Activated naive CD4-positive, alpha-beta T cell treated with anti-CD3 and anti-CD28 coated beads for 36 hours (primary cell): ENCODE measurements at regions of chr17 and their contacts with region 1.

Region 1: GRCh38 chr17:39863918-39864746 is at the start of gene IKZF3:
- DNase-seq: peak; percentile 94
- H3K4me3 Mint-ChIP-seq: peak within 1 kb of the TSS; percentile 92
- H3K27ac Mint-ChIP-seq: peak within 1 kb of the TSS; percentile 95
- H3K4me1 Mint-ChIP-seq: peaks cover 61% of the 10 kb centered on the region
- H3K27me3 Mint-ChIP-seq: no peaks in the 10 kb centered on the region
- total RNA-seq, gene IKZF3: 34.2 to 36.1 TPM

Region 2: GRCh38 chr17:39401412-39402243 is 462.5 kb before region 1 on chr17 and contains the start of gene FBXL20:
- CTCF ChIA-PET with region 1: no interaction called
- intact Hi-C with region 1: loop called (anchors 5 kb)
- DNase-seq: peak; percentile 96
- H3K4me3 Mint-ChIP-seq: peak within 1 kb of the TSS; percentile 91
- H3K27ac Mint-ChIP-seq: peak within 1 kb of the TSS; percentile 90
- H3K4me1 Mint-ChIP-seq: peaks cover 61% of the 10 kb centered on the region
- H3K27me3 Mint-ChIP-seq: no peaks in the 10 kb centered on the region
- total RNA-seq, gene FBXL20: 14.2 to 15.4 TPM

Region 3: DNA sequence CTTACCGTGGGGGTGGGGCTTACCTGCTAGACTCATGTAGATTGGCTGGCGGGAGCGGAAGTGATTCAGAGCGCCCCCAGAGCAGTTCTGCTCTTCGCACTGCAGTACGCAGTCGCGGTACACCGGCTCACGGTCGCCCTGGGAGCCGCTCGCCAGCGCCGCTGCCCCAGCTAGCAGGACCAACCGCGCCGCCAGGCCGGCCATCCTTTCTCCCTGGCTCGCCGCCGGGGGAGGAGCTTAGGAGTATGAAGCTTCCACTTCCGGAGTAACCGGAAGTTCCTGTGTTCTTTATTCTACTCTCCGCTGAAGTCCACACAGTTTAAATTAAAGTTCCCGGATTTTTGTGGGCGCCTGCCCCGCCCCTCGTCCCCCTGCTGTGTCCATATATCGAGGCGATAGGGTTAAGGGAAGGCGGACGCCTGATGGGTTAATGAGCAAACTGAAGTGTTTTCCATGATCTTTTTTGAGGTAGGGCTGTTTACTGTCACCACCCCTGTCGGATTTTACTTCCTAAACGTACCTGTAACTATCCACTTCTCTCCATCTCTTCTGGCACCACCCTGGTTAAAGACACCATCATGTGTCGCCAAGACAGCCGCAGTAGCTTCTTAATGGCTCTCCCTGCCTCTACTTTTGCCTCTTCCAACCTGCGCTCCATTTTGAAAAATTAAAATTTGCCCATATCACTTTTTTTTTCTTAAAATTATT is 176.2 kb before region 1 on chr17 and contains the start of gene PGAP3:
- CTCF ChIA-PET with region 1: no interaction called
- intact Hi-C with region 1: loop called (anchors 5 kb)
- DNase-seq: peak; percentile 89
- H3K4me3 Mint-ChIP-seq: peak within 1 kb of the TSS; percentile 98
- H3K27ac Mint-ChIP-seq: peak within 1 kb of the TSS; percentile 94
- H3K4me1 Mint-ChIP-seq: peaks cover 15% of the 10 kb centered on the region
- H3K27me3 Mint-ChIP-seq: no peaks in the 10 kb centered on the region
- total RNA-seq, gene PGAP3: 11.8 to 11.9 TPM

Region 4: GRCh38 chr17:39769974-39770587 is 94.1 kb before region 1 on chr17:
- CTCF ChIA-PET with region 1: no interaction called
- intact Hi-C with region 1: loop called (anchors 1 kb)
- DNase-seq: peak; percentile 86
- H3K4me3 Mint-ChIP-seq: no peak overlapping the region
- H3K27ac Mint-ChIP-seq: peak overlapping the region; percentile 86
- H3K4me1 Mint-ChIP-seq: peaks cover 88% of the 10 kb centered on the region
- H3K27me3 Mint-ChIP-seq: no peaks in the 10 kb centered on the region

Region 5: GRCh38 chr17:39791111-39791992 is 72.8 kb before region 1 on chr17:
- CTCF ChIA-PET with region 1: interaction called, 3 read pairs
- intact Hi-C with region 1: loop called (anchors 1 kb)
- DNase-seq: peak; percentile 75
- H3K4me3 Mint-ChIP-seq: no peak overlapping the region
- H3K27ac Mint-ChIP-seq: peak overlapping the region; percentile 86
- H3K4me1 Mint-ChIP-seq: peaks cover 57% of the 10 kb centered on the region
- H3K27me3 Mint-ChIP-seq: no peaks in the 10 kb centered on the region

Region 6: DNA sequence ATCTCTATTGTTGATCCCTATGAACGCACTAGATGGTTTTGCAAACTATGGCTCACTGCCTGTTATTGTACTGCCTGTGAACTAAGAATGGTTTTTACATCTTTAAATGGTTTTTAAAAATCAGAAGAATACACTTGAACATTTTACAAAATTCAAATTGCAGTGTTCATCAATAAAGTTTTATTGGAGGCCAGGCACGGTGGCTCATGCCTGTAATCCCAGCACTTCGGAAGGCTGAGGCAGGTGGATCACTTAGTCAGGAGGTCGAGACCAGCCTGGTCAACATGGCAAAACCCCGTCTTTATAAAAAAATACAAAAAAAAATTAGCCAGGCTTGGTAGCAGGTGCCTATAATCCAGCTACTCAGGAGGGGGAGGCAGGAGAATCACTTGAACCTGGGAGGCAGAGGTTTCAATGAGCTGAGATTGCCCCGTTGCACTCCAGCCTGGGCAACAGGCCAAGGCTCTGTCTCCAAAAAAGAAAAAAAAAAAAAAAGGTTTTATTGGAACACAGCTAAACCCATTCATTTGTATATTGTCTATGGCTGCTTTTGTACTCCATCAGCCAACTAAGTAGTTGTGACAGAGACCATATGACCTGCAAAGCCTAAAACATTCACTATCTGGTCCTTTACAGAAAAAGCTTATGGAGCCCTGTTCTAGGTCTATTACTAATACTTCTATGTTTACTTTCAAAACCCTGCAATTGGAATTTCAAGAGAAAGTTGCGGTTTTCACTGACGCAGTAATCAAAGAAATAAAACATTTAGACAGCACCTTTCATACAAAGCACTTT is 18.9 kb before region 1 on chr17:
- CTCF ChIA-PET with region 1: interaction called, 4 read pairs
- intact Hi-C with region 1: loop called (anchors 2 kb)
- DNase-seq: no peak
- H3K4me3 Mint-ChIP-seq: no peak overlapping the region
- H3K27ac Mint-ChIP-seq: peak overlapping the region; percentile 15
- H3K4me1 Mint-ChIP-seq: peaks cover 69% of the 10 kb centered on the region
- H3K27me3 Mint-ChIP-seq: no peaks in the 10 kb centered on the region